Posterior vena cava (tissue), 2 donors: ENCODE measurements at regions of chr11 and their contacts with region 1.

Region 1: DNA sequence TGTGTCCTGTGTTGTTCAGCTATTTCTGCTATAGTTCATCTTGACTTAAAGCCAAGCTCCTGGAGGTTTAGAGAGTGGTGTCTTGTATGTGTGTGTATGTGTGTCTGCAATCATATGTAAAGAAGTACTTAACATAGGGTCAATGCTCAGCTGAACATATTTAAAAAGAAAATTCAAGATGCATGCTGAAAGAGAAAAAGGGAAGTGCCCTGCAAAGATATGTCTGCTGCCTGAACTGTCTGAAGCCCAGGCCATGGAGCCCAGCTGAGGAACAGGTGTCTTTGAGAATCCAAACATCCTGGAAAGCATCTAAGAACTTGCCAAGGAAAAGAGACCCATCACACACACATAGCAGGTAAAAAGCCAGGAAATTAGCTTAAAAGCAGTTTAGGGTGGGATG is 6.6 kb downstream of the TCN1 start:
- DNase-seq: no peak

Region 2: DNA sequence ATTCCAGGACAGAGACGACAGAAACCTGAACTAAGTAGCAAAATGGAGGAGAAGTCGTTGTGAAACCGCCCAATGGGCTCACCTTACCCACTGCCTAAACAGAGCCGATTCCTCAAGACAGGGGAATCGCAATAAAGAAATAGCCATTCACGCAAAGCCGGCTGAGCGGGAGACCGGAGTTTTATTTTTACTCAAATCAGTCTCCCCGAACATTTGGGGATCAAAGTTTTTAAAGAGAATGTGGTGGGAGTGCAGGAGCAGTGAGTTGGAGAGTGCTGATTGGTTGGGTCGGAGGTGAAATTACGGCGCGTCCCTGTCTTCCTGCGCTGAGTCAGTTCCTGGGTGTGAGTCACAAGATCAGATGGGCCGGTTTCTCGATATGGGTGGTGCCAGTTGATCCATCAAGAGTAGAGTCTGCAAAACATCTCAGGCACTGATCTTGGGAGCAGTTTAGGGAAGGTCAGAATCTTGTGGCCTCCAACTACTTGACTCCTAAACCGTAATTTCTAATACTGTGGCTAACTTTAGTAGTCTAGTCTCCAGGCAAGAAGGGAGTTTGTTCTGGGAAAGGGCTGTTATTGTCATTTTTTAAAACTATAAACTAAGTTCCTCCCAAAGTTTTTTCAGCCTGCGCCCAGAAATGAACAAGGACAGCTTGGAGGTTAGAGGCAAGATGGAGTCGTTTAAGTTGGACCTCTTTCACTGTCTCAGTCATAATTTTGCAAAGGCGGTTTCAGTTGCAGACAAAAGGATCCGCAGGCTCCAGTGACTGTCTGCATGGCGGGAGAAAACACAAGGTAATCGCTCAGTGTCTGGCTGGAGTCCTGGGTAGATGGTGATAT is 314.3 kb before region 1 on chr11:
- intact Hi-C with region 1: loop called in 1 of 2 experiments (anchors 5 kb)
- DNase-seq: no peak

Region 3: GRCh38 chr11:59582006-59582405 is 277.7 kb before region 1 on chr11:
- intact Hi-C with region 1: no loop called
- DNase-seq: no peak

Region 4: GRCh38 chr11:59689015-59689414 is 170.7 kb before region 1 on chr11:
- intact Hi-C with region 1: no loop called
- DNase-seq: no peak